Dorsolateral prefrontal cortex (tissue), 120 donors: ENCODE measurements at regions of chr22 and their contacts with region 1.

Region 1: DNA sequence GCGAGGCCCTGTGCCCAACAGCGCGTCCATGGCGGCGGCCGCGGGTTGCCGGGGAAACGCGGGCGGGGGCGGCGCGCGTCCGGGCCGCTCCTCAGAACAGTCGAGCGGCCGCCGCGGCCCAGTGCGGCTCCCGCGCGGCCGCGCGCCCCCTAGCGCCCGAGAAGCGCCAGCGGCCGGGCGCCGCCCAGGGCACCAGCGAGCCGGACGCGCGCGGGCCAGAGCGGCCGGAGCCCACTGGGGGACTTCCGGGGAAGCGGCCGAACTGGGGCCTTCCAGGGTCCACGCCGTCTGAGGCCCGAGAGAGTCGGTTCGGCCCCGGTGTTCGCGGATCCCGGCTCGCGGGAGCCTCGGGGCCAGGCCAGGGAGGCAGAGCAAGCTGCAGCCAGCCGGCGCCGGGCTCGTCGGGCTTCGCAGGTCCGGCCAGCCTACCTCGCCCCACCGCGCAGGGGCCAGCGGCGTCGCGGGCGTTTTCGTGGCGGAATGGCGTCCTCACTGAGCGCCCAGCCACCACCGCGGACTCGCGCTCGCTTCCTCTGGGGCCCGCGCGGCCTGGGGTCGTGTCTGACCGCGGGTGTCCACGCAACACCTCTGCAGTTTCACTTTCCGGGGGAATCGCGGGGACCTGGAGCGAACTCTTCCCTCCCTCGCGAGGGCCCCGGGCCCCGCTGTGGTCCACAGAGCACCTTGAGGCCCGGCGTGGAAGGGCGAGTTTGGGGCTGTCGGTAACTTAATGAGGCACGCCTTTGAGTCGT is at the start of gene DENND6B:
- DNase-seq: peak; percentile 61 to 86 (median 76)
- H3K4me3 ChIP-seq: peak within 1 kb of the TSS; percentile 47 to 97 (median 87)
- H3K27ac ChIP-seq: peak within 1 kb of the TSS; percentile 31 to 97 (median 93)
- H3K27me3 ChIP-seq: no peaks in the 10 kb centered on the region
- CTCF ChIP-seq: peak in 55 of 56 donors; percentile 17 to 80 (median 58)
- total RNA-seq, gene DENND6B: 12.7 to 56.5 (median 38.0) TPM

Region 2: GRCh38 chr22:50308536-50308935 is 18.6 kb before region 1 on chr22:
- intact Hi-C with region 1: loop called in 1 of 2 experiments (anchors 2 kb)
- DNase-seq: peak in 7 of 10 donors; percentile 34 to 69 (median 60)
- H3K4me3 ChIP-seq: peak overlapping the region in 6 of 59 donors; percentile 0 to 35 (median 21)
- H3K27ac ChIP-seq: peak overlapping the region in 58 of 59 donors; percentile 33 to 93 (median 84)
- H3K27me3 ChIP-seq: no peaks in the 10 kb centered on the region
- CTCF ChIP-seq: no peak